AG04449 (cell line): ENCODE measurements at regions of chr11 and their contacts with region 1.

Region 1: GRCh38 chr11:95835768-95836488 is 45.6 kb downstream of the CEP57 start:
- DNase-seq: peak; percentile 82
- H3K4me3 ChIP-seq: no peak overlapping the region
- CTCF ChIP-seq: peak; percentile 79

Region 2: GRCh38 chr11:95821640-95822039 is 14.3 kb before region 1 on chr11:
- CTCF ChIA-PET with region 1: interaction called, 33 read pairs
- POLR2A ChIA-PET with region 1: no interaction called
- DNase-seq: no peak
- H3K4me3 ChIP-seq: no peak overlapping the region
- CTCF ChIP-seq: no peak

Region 3: GRCh38 chr11:95849087-95849825 is 13.3 kb after region 1 on chr11:
- CTCF ChIA-PET with region 1: interaction called, 18 read pairs
- POLR2A ChIA-PET with region 1: no interaction called
- DNase-seq: no peak
- H3K4me3 ChIP-seq: no peak overlapping the region
- CTCF ChIP-seq: peak; percentile 44

Region 4: GRCh38 chr11:95968585-95968984 is 132.7 kb after region 1 on chr11:
- CTCF ChIA-PET with region 1: interaction called, 16 read pairs
- POLR2A ChIA-PET with region 1: no interaction called
- DNase-seq: no peak
- H3K4me3 ChIP-seq: no peak overlapping the region
- CTCF ChIP-seq: peak; percentile 10

Region 5: DNA sequence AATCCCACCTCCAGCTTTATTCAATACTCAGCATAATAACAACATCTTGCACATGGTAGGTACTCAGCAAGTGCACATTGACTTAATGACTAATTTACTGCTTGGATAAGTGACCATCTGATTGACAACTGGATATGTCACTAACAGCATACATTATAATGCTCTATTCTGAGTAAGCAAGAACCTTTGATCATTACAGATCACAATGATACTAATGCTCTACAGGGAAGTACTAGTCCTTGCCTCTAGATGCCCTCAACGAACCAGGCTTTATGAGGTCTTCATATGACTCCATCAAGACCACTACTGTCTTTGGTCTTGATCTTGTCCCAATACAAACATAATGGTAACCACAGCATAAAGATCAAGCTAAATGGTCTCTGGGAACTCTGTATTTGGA is 255.5 kb after region 1 on chr11:
- CTCF ChIA-PET with region 1: no interaction called
- POLR2A ChIA-PET with region 1: no interaction called
- DNase-seq: no peak
- H3K4me3 ChIP-seq: no peak overlapping the region
- CTCF ChIP-seq: no peak

Region 6: DNA sequence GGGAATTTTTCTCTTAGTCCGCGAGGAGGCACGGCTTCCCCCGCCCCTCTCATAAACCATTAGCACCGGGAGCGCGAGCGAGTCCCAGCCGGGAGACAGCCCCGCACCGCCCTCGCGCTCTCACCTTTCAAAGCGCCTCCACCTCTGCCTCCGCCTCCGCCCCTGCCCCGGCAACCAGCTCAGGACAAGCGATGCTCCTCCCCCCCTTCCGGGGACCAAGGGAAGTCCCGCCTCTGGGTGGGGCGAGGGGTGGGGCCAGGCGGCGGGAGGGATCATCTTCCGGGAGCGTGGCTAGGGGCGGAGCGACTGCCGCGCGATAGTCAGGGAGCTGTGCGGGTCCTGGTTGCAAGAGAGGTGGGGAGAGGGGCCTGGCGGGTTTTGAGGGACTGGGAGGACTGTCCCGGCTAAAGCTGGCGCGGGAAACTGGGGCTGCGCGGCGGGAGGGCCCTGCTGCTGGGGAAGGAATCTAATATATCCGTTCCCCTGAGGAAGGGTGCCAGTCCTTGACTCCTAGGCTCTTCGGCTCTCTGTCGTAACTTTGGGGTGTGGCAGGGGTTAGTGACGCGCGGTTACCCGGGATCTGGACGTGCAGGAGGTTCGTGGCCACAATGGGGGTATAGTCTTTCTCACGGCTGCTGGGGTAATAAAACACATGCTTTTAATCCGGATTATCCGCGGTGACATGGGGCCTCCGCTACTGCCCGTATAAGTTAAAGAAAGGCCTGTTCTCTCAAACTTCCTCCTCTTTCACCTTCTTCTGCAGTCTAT is 554.0 kb after region 1 on chr11 and contains the starts of genes CCDC82 and JRKL:
- CTCF ChIA-PET with region 1: interaction called, 31 read pairs
- POLR2A ChIA-PET with region 1: interaction called, 3 read pairs
- DNase-seq: peak; percentile 71
- H3K4me3 ChIP-seq: peak within 1 kb of the TSS; percentile 82
- CTCF ChIP-seq: no peak

Region 7: GRCh38 chr11:96424693-96425092 is 588.8 kb after region 1 on chr11:
- CTCF ChIA-PET with region 1: interaction called, 17 read pairs
- POLR2A ChIA-PET with region 1: no interaction called
- DNase-seq: no peak
- H3K4me3 ChIP-seq: no peak overlapping the region
- CTCF ChIP-seq: no peak